ENCODE measurements at regions of chr17 and their contacts with region 1.

Region 1: GRCh38 chr17:42405963-42406495 is 17.0 kb downstream of the CAVIN1 start:
- DNase-seq: peak; percentile 92
- ATAC-seq: peak; percentile 66
- H3K4me3 Mint-ChIP-seq: no peak overlapping the region
- H3K27ac Mint-ChIP-seq: no peak overlapping the region
- H3K4me1 Mint-ChIP-seq: peaks cover 43% of the 10 kb centered on the region
- H3K27me3 Mint-ChIP-seq: no peaks in the 10 kb centered on the region; the same call in 1 of the 2 replicates
- CTCF ChIP-seq: peak; percentile 35; the same call in 1 of the 2 replicates

Region 2: GRCh38 chr17:41930009-41930832 is 475.8 kb before region 1 on chr17 and contains the start of gene ODAD4:
- CTCF ChIA-PET with region 1: no interaction called
- POLR2A ChIA-PET with region 1: no interaction called
- DNase-seq: peak; percentile 95
- ATAC-seq: peak; percentile 99
- H3K4me3 Mint-ChIP-seq: peak within 1 kb of the TSS; percentile 96
- H3K27ac Mint-ChIP-seq: peak within 1 kb of the TSS; percentile 99
- H3K4me1 Mint-ChIP-seq: peaks cover 14% of the 10 kb centered on the region
- H3K27me3 Mint-ChIP-seq: no peaks in the 10 kb centered on the region; the same call in 1 of the 2 replicates
- CTCF ChIP-seq: no peak
- total RNA-seq, gene ODAD4: 1.2 to 2.1 TPM (median 1.9 TPM) in 3 replicates

Region 3: DNA sequence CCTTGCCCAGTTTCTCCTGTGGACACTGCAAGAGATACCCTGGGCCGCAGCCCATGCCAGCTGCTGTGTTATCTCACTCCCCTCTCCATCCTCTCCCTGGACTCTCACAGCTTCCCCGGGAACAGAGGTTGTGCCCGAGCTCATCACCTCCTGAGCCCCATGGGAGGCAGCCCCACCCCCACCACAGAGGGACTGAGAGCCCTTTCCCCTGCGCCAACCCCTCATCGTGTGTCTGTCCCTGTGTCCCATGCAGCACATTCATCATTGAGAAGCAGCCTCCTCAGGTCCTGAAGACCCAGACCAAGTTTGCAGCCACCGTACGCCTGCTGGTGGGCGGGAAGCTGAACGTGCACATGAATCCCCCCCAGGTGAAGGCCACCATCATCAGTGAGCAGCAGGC is 105.0 kb before region 1 on chr17:
- CTCF ChIA-PET with region 1: interaction called, 11 read pairs
- POLR2A ChIA-PET with region 1: no interaction called
- DNase-seq: no peak
- ATAC-seq: no peak
- H3K4me3 Mint-ChIP-seq: no peak overlapping the region
- H3K27ac Mint-ChIP-seq: no peak overlapping the region
- H3K4me1 Mint-ChIP-seq: 0 out of 2 replicates have a peak, but pooled peaks cover 2% of the 10 kb centered on the region
- H3K27me3 Mint-ChIP-seq: no peaks in the 10 kb centered on the region; the same call in none of the 2 replicates
- CTCF ChIP-seq: no peak

Region 4: DNA sequence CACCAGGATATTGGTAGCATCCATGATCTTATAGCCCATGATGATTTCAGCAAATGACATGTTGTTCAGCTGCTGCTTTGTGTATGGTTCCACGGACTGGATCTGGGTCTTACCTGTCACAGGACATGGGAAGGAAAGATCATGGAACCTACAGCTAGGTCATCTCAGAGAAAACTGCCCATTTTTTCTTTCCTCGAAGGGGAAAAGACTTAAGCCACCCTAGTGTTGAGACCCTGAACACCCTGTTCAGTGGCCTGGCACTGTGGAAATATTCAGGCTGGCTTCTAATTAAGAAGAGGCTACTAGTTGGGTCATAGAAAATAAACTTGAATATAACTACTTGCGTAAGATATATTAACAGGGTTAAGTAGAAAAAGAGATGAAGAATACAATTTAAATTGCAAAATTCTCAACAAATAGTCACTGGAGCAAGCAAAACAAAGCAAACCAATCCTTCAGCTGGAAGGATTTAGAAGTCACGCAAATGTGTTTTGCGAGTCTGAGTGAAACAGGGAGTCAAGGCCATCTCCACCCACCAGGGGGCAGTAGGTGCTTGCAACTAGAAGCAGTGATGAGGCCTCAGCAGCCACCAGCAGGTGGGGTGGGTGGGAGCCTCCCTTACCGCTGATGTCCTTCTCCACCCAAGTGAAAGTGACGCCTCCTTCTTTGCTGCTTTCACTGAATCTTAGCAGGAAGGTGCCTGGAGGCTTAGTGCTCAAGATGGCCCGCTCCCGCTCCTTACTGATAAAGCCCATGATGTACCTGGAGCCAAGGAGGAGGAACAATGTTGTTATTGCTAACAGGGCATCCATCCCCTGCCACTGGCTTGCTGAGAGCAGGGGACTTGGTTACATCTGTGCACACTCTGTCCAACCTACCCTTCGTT is 83.4 kb before region 1 on chr17:
- CTCF ChIA-PET with region 1: interaction called, 196 read pairs
- POLR2A ChIA-PET with region 1: interaction called, 3 read pairs
- DNase-seq: peak; percentile 98
- ATAC-seq: peak; percentile 97
- H3K4me3 Mint-ChIP-seq: no peak overlapping the region
- H3K27ac Mint-ChIP-seq: peak overlapping the region; percentile 34
- H3K4me1 Mint-ChIP-seq: peaks cover 16% of the 10 kb centered on the region
- H3K27me3 Mint-ChIP-seq: no peaks in the 10 kb centered on the region; the same call in 1 of the 2 replicates
- CTCF ChIP-seq: peak; percentile 97

Region 5: DNA sequence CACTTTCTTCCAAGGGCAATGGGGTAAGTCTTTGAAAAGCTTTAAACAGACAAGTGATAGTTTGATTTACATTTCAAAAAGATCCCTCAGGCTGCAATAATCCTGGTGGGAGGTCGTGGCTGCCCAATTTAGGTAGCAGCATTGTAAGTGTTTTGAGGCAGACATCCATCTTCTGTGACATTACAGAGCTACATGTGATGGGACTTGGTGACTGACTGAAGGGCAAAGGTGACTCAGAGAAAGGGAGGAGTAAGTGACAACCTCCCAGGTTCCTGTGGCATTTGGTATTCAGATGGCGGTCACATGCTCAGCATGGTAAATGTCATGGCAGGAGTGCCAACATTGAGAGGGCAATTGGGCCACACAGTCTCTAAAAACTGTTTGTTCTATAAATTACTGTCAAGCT is 44.2 kb before region 1 on chr17:
- CTCF ChIA-PET with region 1: interaction called, 11 read pairs
- POLR2A ChIA-PET with region 1: interaction called, 3 read pairs
- DNase-seq: no peak
- ATAC-seq: peak; percentile 33; the same call in 1 of the 2 replicates
- H3K4me3 Mint-ChIP-seq: 0 out of 2 replicates have a peak overlapping the region, but pooled peaks have one; percentile 2
- H3K27ac Mint-ChIP-seq: no peak overlapping the region
- H3K4me1 Mint-ChIP-seq: peaks cover 47% of the 10 kb centered on the region
- H3K27me3 Mint-ChIP-seq: no peaks in the 10 kb centered on the region
- CTCF ChIP-seq: no peak

Region 6: DNA sequence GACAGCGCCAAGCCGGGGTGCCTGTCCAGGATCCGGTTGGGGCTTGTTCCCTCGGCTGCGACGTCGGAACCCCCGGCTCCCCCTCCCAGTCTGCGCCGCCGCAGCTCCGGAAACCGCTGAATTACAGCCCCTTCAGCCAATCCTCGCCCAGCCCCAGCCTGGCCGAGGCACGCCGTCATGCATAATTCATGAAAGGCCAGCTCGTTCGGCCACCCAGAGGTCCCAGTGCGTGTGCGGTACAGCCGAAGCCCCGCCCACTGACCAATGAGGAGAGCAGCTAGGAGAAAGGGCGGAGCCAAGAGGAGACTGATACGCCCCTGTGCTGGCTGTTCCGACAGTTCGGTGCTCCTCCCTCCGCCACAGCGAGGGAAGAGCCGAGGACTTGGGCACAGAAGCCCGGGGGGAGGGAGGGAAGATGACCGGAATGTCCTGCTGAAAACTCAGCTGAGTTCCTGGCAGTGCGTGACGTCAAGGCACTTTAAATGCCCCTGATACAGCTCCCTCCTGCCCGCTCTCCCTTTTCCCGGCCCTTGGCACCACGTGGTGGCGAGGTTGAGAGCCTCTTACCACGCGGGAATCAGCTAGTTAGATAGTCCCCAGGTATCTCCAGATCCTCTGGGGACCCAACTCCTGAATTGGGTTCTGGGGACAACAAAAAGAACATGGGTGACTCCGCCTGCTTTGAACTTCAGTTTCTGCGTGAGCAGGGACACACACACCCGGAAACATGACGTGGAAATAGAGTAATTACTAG is 17.5 kb before region 1 on chr17 and contains the start of gene STAT3:
- CTCF ChIA-PET with region 1: interaction called, 41 read pairs
- POLR2A ChIA-PET with region 1: interaction called, 11 read pairs
- DNase-seq: peak; percentile 100
- ATAC-seq: peak; percentile 97
- H3K4me3 Mint-ChIP-seq: peak within 1 kb of the TSS; percentile 94
- H3K27ac Mint-ChIP-seq: peak within 1 kb of the TSS; percentile 98
- H3K4me1 Mint-ChIP-seq: peaks cover 41% of the 10 kb centered on the region
- H3K27me3 Mint-ChIP-seq: no peaks in the 10 kb centered on the region
- CTCF ChIP-seq: no peak
- total RNA-seq, gene STAT3: 74.4 to 98.0 TPM (median 74.9 TPM) in 3 replicates

Region 7: DNA sequence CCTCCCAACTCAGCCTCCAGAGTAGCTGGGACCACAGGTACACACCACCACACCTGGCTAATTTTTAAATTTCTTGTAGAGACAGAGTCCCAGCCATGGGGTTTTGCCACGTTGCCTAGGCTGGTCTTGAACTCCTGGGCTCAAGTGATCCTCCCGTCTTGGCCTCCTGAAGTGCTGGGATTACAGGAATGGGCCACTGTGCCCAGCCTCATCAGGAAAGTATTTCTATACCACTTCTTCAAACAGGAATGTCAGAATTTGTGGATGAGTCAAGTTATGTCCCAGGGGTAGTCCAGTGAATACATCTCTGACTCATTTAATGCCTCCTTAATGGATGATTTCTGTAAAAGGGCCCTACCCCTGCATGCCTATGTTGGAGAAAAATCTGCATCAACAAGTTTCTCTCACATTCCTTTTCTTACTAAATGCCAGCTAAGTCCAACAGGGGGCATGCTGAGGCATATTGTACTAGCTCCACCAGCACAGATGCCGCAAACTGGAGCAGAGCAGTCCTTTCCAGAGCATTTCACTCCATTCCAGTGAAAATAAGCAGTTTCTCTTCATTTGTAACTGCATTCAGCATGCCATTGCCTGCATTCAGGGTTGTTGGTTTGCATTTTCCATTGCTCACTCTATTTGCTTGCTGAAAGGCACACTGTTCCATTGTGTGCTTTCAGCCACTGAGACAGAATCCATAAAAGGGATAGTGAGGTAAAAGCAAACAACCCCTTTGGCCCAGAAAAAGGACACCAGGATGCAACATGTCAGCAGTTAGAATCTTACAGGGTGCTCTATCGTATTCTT is 22.3 kb after region 1 on chr17:
- CTCF ChIA-PET with region 1: interaction called, 40 read pairs
- POLR2A ChIA-PET with region 1: interaction called, 3 read pairs
- DNase-seq: peak; percentile 59
- ATAC-seq: peak; percentile 83
- H3K4me3 Mint-ChIP-seq: no peak overlapping the region
- H3K27ac Mint-ChIP-seq: peak overlapping the region; percentile 92
- H3K4me1 Mint-ChIP-seq: peaks cover 25% of the 10 kb centered on the region
- H3K27me3 Mint-ChIP-seq: peaks cover 24% of the 10 kb centered on the region
- CTCF ChIP-seq: peak; percentile 50; the same call in 1 of the 2 replicates

Region 8: GRCh38 chr17:42527273-42527703 is 121.3 kb after region 1 on chr17:
- CTCF ChIA-PET with region 1: interaction called, 25 read pairs
- POLR2A ChIA-PET with region 1: interaction called, 4 read pairs
- DNase-seq: peak; percentile 86
- ATAC-seq: peak; percentile 95
- H3K4me3 Mint-ChIP-seq: no peak overlapping the region
- H3K27ac Mint-ChIP-seq: no peak overlapping the region
- H3K4me1 Mint-ChIP-seq: peaks cover 4% of the 10 kb centered on the region
- H3K27me3 Mint-ChIP-seq: peaks cover 21% of the 10 kb centered on the region
- CTCF ChIP-seq: peak; percentile 79

Measured in WTC11 (cell line).